Panc1 (cell line): ENCODE measurements at regions of chr6 and their contacts with region 1.

Region 1: DNA sequence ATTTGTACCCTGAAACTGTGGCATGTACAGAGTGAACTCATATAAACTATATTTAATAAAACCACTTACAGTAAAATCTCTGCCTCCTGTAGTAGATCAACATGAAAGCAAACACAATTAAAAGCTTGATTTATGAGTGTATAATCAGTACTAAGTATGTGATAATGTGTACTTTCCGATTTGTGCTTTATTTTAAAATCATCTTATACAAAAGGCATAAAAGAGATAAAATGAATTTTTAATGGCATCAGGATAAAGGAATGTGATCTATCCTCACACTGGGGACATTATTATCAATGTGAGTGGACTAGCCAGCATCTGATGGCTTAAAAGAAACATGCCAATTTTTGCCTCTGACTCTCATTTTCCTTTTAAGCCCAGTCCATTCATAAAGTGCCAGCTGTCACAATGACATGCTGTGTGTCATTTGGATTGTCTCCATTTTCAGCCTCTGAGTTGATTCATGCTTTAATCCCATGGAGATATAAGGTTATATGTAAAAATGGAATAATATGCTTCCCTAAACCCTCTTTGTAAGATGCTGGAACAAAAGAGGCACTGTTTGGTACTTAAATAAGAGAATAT is 831.6 kb upstream of the EYS start:
- DNase-seq: no peak
- ATAC-seq: no peak
- H3K4me3 ChIP-seq: no peak overlapping the region
- H3K27ac ChIP-seq: no peak overlapping the region
- H3K4me1 ChIP-seq: no peaks in the 10 kb centered on the region
- H3K27me3 ChIP-seq: no peaks in the 10 kb centered on the region
- CTCF ChIP-seq: no peak

Region 2: GRCh38 chr6:65908065-65908464 is 630.6 kb before region 1 on chr6:
- CTCF ChIA-PET with region 1: no interaction called
- POLR2A ChIA-PET with region 1: no interaction called
- in situ Hi-C with region 1: no loop called
- intact Hi-C with region 1: no loop called
- DNase-seq: no peak
- ATAC-seq: no peak
- H3K4me3 ChIP-seq: no peak overlapping the region
- H3K27ac ChIP-seq: no peak overlapping the region
- H3K4me1 ChIP-seq: no peaks in the 10 kb centered on the region
- H3K27me3 ChIP-seq: no peaks in the 10 kb centered on the region
- CTCF ChIP-seq: no peak

Region 3: GRCh38 chr6:66558189-66558588 is 19.5 kb after region 1 on chr6:
- CTCF ChIA-PET with region 1: no interaction called
- POLR2A ChIA-PET with region 1: no interaction called
- in situ Hi-C with region 1: no loop called
- intact Hi-C with region 1: no loop called
- DNase-seq: no peak
- ATAC-seq: no peak
- H3K4me3 ChIP-seq: no peak overlapping the region
- H3K27ac ChIP-seq: no peak overlapping the region
- H3K4me1 ChIP-seq: no peaks in the 10 kb centered on the region
- H3K27me3 ChIP-seq: no peaks in the 10 kb centered on the region
- CTCF ChIP-seq: no peak; the same call in 1 of the 2 replicates

Region 4: DNA sequence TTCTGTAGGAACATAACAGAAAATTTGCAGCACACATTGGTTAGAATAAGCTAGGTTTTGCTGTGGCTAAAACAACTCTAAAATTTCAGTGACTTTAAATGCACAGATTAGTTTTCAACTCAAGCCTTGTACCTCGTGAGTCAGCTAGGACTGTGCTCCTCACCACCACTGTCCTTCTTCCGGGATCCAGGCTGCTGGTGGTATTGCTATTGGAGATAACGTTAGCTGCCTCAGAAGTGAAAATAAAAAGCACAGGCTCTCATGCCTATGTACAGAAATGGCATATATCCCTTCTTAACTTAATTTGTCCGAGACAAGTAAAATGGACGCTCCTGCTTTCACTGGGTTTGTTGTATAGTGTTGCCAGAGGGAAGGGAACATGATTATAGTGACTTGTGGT is 99.5 kb after region 1 on chr6:
- CTCF ChIA-PET with region 1: no interaction called
- POLR2A ChIA-PET with region 1: no interaction called
- in situ Hi-C with region 1: no loop called
- intact Hi-C with region 1: no loop called
- DNase-seq: no peak
- ATAC-seq: no peak; the same call in 1 of the 2 replicates
- H3K4me3 ChIP-seq: no peak overlapping the region
- H3K27ac ChIP-seq: no peak overlapping the region
- H3K4me1 ChIP-seq: no peaks in the 10 kb centered on the region
- H3K27me3 ChIP-seq: no peaks in the 10 kb centered on the region
- CTCF ChIP-seq: no peak

Region 5: DNA sequence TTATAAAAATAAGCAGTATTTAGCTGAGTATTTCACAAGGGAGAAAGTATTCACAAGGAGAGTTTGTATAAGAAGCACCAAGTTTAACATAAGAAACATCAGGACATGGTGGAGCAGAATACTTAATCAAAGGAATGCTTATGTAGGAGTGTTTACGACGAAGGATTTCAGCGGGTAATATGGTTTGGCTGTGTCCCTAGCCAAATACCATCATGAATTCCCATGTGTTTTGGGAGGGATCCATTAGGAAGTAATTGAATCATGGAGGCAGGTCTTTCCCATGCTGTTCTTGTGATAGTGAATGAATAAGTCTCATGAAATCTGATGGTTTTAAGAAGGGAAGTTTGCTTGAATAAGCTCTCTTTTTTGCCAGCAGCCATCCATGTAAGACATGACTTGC is 997.3 kb after region 1 on chr6:
- CTCF ChIA-PET with region 1: no interaction called
- POLR2A ChIA-PET with region 1: no interaction called
- in situ Hi-C with region 1: no loop called
- intact Hi-C with region 1: loop called (anchors 5 kb)
- DNase-seq: no peak
- ATAC-seq: no peak
- H3K4me3 ChIP-seq: no peak overlapping the region
- H3K27ac ChIP-seq: no peak overlapping the region
- H3K4me1 ChIP-seq: no peaks in the 10 kb centered on the region
- H3K27me3 ChIP-seq: no peaks in the 10 kb centered on the region
- CTCF ChIP-seq: no peak